ENCODE measurements at regions of chr13 and their contacts with region 1.

Region 1: GRCh38 chr13:28792992-28793391 is 27.1 kb upstream of the MTUS2 start:
- DNase-seq: no peak
- H3K4me3 ChIP-seq: no peak overlapping the region
- H3K27ac ChIP-seq: no peak overlapping the region
- H3K27me3 ChIP-seq: peaks cover 0 to 33% (median 0%) of the 10 kb centered on the region in 45 donors
- CTCF ChIP-seq: no peak

Region 2: GRCh38 chr13:28324181-28324789 is 468.7 kb before region 1 on chr13:
- intact Hi-C with region 1: loop called in 1 of 2 experiments (anchors 10 kb)
- DNase-seq: peak in 4 of 10 donors; percentile 16 to 57 (median 42)
- H3K4me3 ChIP-seq: no peak overlapping the region
- H3K27ac ChIP-seq: no peak overlapping the region
- H3K27me3 ChIP-seq: peaks cover 0 to 6% (median 0%) of the 10 kb centered on the region in 45 donors
- CTCF ChIP-seq: peak; percentile 39 to 74 (median 64)

Region 3: GRCh38 chr13:28531077-28531844 is 261.7 kb before region 1 on chr13:
- intact Hi-C with region 1: loop called in 1 of 2 experiments (anchors 10 kb)
- DNase-seq: peak in 1 of 10 donors; percentile 30
- H3K4me3 ChIP-seq: peak overlapping the region; percentile 15 to 70 (median 49)
- H3K27ac ChIP-seq: peak overlapping the region in 20 of 59 donors; percentile 2 to 69 (median 31)
- H3K27me3 ChIP-seq: peaks cover 0 to 67% (median 31%) of the 10 kb centered on the region in 45 donors
- CTCF ChIP-seq: no peak

Region 4: DNA sequence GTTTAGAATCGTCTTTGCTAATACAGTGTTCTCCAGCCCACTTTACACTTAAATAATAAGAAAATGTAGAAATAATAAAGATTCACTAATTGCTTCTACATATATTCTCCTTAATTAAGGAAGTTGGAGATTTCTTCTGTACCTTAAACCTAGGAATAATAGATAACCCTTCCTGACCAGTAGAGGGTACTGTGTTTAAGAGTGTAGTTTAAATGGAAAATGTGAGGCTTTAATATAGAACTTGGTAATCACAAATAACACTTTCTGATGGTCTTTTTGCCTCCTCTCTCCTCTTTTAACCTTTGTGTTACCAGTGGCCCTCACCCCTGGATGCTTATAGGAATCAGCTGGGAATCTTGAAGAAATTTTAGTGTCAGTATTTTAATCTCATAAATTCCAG is 113.4 kb before region 1 on chr13:
- intact Hi-C with region 1: loop called (anchors 10 kb)
- DNase-seq: no peak
- H3K4me3 ChIP-seq: no peak overlapping the region
- H3K27ac ChIP-seq: peak overlapping the region in 2 of 59 donors; percentile 10 to 23
- H3K27me3 ChIP-seq: no peaks in the 10 kb centered on the region
- CTCF ChIP-seq: peak in 53 of 56 donors; percentile 10 to 57 (median 40)

Region 5: GRCh38 chr13:28718543-28719226 is 74.3 kb before region 1 on chr13 and contains the start of gene SLC46A3:
- intact Hi-C with region 1: loop called (anchors 5 to 10 kb)
- DNase-seq: peak; percentile 98 to 99 (median 99)
- H3K4me3 ChIP-seq: peak within 1 kb of the TSS; percentile 54 to 98 (median 87)
- H3K27ac ChIP-seq: peak within 1 kb of the TSS; percentile 75 to 99 (median 97)
- H3K27me3 ChIP-seq: no peaks in the 10 kb centered on the region
- CTCF ChIP-seq: peak in 44 of 56 donors; percentile 5 to 63 (median 31)
- total RNA-seq, gene SLC46A3: 8.6 to 20.2 (median 13.7) TPM

Region 6: DNA sequence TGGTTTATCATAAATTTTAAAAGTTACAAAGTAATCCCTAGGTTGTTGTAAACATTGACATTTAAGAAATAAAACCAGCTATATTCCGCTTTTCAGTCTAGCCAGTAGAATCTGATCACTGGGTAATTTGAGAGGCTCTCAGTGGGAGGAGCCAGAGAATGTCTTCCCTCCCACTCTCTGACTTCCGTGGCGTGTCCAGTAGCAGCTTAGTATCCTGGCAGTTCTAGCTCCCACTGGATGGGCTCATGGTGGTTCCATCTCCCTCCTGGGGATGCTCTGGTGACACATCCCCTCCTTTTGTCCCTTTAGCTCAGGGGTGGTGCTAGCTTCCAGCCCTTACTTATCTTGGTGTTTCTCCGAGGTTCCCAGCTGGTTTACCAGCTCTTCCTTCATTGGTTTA is 61.7 kb after region 1 on chr13:
- intact Hi-C with region 1: no loop called
- DNase-seq: no peak
- H3K4me3 ChIP-seq: no peak overlapping the region
- H3K27ac ChIP-seq: no peak overlapping the region
- H3K27me3 ChIP-seq: peaks cover 0 to 20% (median 0%) of the 10 kb centered on the region in 45 donors
- CTCF ChIP-seq: no peak

Measured in dorsolateral prefrontal cortex (tissue), 120 donors.